ENCODE measurements at regions of chr11 and their contacts with region 1.

Region 1: DNA sequence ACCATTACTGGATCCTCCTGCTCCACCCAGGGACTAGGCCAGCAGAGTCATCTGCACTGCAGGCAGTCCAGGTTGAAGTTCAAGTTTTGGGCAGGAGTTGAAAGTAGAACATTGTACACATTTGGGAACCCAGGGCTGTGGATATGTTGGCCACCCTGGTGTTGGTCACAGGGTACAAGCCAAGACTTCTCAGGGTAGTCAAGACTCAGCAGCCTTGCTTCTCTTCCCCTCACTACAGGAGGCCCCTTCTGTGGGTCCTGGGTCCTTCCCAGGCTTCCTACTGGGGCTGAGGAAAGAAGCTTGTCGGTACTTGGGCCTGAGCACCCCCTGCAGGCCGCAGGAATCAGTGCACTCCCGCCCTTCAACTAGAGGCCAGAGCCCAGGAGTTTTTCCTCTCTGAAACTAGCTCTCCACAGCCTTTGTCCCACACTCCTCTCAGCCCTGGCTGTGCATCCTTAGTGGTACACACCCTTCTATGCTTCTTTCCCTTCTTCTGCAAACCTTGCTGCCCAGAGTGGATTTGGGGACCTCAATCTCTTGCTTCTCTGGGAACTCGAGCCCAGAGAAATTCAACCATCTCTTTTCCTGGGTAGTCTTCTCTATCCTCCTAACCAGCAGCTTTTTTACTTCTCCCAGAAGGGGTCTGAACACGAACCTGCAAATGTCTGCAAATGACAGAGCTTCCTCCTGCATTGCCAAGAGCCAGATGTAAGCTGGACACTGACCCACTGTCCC is 2.6 kb upstream of the HPX start:
- DNase-seq: peak; percentile 74
- ATAC-seq: peak; percentile 86
- H3K4me3 Mint-ChIP-seq: no peak overlapping the region
- H3K27ac Mint-ChIP-seq: no peak overlapping the region
- H3K4me1 Mint-ChIP-seq: no peaks in the 10 kb centered on the region
- H3K27me3 Mint-ChIP-seq: no peaks in the 10 kb centered on the region

Region 2: DNA sequence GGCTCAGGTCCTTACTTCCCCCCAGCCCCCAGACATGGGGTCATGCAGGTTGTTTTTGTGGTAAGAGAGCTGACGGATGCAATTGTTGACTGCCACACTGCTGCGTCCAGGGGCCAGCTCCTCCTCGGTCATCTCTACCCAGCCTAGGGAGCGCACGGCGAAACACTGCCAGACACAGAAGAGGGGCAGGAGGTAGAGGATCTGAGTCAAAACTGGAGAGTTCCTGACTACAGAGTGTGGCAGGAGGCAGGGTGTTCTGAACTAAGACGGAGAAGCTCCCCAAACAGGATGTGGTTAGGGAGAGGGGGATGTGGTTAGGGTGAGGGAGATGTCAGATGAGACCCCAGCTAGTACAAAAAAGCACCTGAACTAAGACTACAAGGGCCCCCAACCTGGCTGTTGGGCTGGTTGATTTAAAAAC is 40.9 kb before region 1 on chr11:
- CTCF ChIA-PET with region 1: interaction called, 28 read pairs
- POLR2A ChIA-PET with region 1: no interaction called
- intact Hi-C with region 1: no loop called
- DNase-seq: peak; percentile 85
- ATAC-seq: peak; percentile 88
- H3K4me3 Mint-ChIP-seq: peak overlapping the region; percentile 65
- H3K27ac Mint-ChIP-seq: peak overlapping the region; percentile 95
- H3K4me1 Mint-ChIP-seq: peaks cover 78% of the 10 kb centered on the region
- H3K27me3 Mint-ChIP-seq: no peaks in the 10 kb centered on the region

Region 3: GRCh38 chr11:6431861-6432260 is 11.6 kb before region 1 on chr11:
- CTCF ChIA-PET with region 1: interaction called, 20 read pairs
- POLR2A ChIA-PET with region 1: no interaction called
- intact Hi-C with region 1: no loop called
- DNase-seq: no peak
- ATAC-seq: no peak
- H3K4me3 Mint-ChIP-seq: no peak overlapping the region
- H3K27ac Mint-ChIP-seq: no peak overlapping the region
- H3K4me1 Mint-ChIP-seq: peaks cover 5% of the 10 kb centered on the region
- H3K27me3 Mint-ChIP-seq: no peaks in the 10 kb centered on the region

Region 4: DNA sequence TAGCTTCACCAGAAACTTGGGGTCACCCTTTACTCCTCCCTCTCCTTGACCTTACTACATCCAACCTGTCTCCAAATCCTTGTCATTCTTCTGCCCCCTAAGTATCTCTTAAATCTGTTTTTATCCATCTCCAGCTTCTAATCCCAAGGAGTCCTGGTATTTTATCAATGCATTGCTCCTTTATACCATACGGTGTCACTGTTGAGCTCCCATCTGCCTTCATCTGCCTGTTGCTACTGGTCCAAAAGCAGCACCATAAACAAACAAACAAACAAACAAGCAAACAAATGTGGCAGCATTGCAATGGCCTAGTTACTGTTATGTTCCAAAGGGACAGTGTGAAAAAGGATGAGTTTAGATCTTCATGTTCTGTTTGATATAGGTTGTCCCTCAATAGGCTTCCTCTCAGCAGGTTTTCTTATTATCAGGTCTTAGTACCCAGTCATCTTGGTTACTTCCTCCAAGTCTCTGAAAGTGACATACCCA is 87.9 kb after region 1 on chr11:
- CTCF ChIA-PET with region 1: interaction called, 13 read pairs
- POLR2A ChIA-PET with region 1: no interaction called
- intact Hi-C with region 1: no loop called
- DNase-seq: peak; percentile 26
- ATAC-seq: peak; percentile 71
- H3K4me3 Mint-ChIP-seq: no peak overlapping the region
- H3K27ac Mint-ChIP-seq: no peak overlapping the region
- H3K4me1 Mint-ChIP-seq: peaks cover 11% of the 10 kb centered on the region
- H3K27me3 Mint-ChIP-seq: no peaks in the 10 kb centered on the region

Region 5: GRCh38 chr11:6757373-6757967 is 314.0 kb after region 1 on chr11:
- CTCF ChIA-PET with region 1: no interaction called
- POLR2A ChIA-PET with region 1: no interaction called
- intact Hi-C with region 1: loop called in 1 of 2 experiments (anchors 5 kb)
- DNase-seq: peak; percentile 76
- ATAC-seq: peak; percentile 85
- H3K4me3 Mint-ChIP-seq: no peak overlapping the region
- H3K27ac Mint-ChIP-seq: no peak overlapping the region
- H3K4me1 Mint-ChIP-seq: peaks cover 10% of the 10 kb centered on the region
- H3K27me3 Mint-ChIP-seq: no peaks in the 10 kb centered on the region

Region 6: DNA sequence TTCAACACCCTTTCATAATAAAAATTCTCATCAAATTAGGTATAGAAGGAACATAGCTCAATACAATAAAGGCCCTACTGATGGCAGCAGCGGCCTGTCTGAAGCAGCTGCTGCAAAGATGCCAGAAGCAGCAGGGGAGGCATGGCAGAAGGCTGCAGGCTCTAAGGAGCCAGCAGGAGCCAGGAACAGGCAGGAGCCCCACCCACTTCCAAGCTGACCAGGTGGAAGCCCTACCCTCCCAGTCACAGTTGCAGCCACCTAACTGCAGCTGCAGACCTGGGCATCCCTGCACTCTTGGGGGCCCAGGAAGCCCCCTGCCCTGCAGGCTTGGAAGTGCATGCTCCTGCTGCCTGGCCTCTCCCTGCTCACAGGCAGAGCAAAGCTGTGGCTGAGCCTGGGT is 374.3 kb after region 1 on chr11:
- CTCF ChIA-PET with region 1: no interaction called
- POLR2A ChIA-PET with region 1: no interaction called
- intact Hi-C with region 1: no loop called
- DNase-seq: no peak
- ATAC-seq: no peak
- H3K4me3 Mint-ChIP-seq: no peak overlapping the region
- H3K27ac Mint-ChIP-seq: no peak overlapping the region
- H3K4me1 Mint-ChIP-seq: no peaks in the 10 kb centered on the region
- H3K27me3 Mint-ChIP-seq: peaks cover 14% of the 10 kb centered on the region

Measured in activated CD4-positive, alpha-beta T cell treated with anti-CD3 and anti-CD28 coated beads for 36 hours (primary cell).